GM13976 (cell line): ENCODE measurements at regions of chr5 and their contacts with region 1.

Region 1: GRCh38 chr5:178075840-178076548 is 37.3 kb upstream of the N4BP3 start:
- DNase-seq: peak; percentile 87
- CTCF ChIP-seq: peak; percentile 81

Region 2: DNA sequence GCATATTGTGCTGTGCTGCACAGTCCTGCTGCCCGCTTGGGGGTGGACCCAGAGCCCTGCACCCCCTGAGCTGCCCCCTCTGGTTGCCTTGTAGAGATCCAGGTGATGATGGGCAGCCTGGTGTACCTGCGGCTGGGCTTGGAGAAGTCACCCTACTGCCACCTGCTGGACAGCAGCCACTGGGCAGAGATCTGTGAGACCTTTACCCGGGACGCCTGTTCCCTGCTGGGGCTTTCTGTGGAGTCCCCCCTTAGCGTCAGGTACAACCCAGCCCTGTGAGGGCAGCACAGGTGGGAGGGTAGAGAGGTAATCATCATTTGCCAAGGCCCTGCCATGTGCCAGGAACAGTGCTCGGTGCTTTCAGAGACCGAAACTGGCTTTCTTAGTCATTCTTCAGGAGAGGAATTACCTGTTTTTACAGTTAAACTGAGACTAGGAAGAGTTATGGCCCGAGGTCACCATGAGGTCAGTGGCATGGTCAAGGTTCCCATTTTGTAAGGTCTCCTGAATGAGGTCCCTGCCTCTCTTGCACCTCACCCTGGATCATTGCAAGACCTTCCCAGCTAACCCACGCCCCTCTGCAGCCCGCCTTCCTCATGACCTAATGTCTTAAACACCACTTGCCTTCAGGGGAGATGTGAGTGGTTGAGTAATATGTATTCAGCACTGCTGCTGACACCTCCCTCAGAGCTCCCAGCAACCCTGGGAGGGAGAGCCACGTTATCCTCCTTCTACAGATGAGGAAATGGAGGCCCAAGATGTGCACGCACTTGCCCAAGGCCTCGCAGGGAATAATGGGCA is 70.2 kb after region 1 on chr5:
- in situ Hi-C with region 1: loop called (anchors 10 kb)
- DNase-seq: peak; percentile 83
- CTCF ChIP-seq: peak; percentile 81

Region 3: DNA sequence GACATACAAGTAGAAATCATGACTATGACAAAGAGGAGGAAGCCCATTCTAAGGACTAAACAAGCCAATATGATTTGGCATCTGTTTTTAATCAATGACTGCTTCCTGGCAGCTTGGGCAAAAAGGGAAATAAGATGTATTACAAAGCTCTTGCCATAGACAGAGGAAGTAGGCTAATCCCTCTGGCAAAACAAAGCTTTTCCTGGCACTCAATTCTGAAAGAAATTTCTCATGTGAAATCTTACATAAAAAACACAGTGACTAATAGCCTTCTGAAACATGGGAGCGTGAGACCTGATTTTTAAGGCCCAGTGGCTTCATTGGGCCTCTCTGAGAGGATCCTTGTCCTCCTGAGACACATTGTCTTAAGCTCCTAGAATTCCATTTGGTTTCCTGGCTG is 420.6 kb after region 1 on chr5:
- in situ Hi-C with region 1: no loop called
- DNase-seq: no peak
- CTCF ChIP-seq: no peak